Activated naive CD4-positive, alpha-beta T cell treated with anti-CD3 and anti-CD28 coated beads for 36 hours (primary cell): ENCODE measurements at regions of chr18 and their contacts with region 1.

Region 1: DNA sequence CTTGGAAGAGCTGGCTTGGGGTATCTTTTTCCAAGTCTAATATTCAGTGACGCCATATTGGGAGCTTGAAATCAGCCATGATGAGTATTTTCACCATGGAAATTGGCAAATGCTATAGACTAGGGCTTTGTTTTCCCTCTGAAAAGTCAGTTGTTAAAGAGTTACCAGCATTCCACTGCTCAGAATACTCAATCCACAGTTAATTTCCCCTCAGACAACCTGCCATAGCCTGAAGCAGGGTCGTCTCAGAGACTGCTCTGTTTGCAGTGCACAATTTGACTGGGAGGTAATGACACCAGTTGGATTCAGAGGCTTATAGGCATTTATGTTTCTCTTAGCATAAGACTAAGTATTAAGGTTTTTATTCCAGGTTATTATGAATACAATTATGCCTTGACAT is 35.5 kb upstream of the TMEM200C start:
- DNase-seq: no peak
- H3K4me3 Mint-ChIP-seq: no peak overlapping the region
- H3K27ac Mint-ChIP-seq: no peak overlapping the region
- H3K4me1 Mint-ChIP-seq: no peaks in the 10 kb centered on the region
- H3K27me3 Mint-ChIP-seq: peaks cover 13% of the 10 kb centered on the region

Region 2: DNA sequence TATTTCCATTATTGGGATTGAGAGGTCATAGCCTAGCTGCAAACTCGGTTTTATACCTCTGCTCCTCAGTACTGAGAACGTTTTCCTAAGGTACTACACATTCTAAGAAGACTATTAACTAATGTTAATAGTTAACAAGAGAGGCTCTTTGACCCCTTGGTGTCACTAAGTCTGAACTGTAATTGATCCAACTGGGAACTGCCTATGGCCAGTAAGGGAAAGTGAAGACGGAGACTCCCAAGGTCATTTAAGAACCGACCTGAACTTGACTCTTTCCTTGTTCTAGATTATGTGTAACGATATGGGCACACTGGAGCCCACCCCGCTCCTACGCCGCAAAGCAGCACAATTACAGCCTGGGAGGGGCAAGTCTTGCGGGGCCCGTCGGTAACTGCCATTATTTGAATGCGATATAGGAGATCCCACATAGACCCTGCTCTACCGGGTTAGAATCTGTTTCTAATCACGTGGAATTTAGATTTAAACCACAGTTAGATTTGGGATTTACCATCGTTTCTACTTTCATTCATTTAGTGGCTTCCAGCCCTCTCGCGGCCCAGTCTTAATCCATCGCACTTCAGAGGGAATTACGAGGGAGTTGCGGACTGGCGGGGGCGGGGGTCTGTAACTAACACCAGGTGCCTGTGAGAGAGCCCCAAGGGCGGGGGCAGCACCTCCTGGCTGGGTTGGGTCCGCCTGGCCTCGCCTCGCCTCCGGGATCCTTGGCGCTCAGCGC is 302.8 kb before region 1 on chr18:
- CTCF ChIA-PET with region 1: no interaction called
- intact Hi-C with region 1: no loop called
- DNase-seq: no peak
- H3K4me3 Mint-ChIP-seq: peak overlapping the region; percentile 58
- H3K27ac Mint-ChIP-seq: no peak overlapping the region
- H3K4me1 Mint-ChIP-seq: no peaks in the 10 kb centered on the region
- H3K27me3 Mint-ChIP-seq: peaks cover 26% of the 10 kb centered on the region

Region 3: DNA sequence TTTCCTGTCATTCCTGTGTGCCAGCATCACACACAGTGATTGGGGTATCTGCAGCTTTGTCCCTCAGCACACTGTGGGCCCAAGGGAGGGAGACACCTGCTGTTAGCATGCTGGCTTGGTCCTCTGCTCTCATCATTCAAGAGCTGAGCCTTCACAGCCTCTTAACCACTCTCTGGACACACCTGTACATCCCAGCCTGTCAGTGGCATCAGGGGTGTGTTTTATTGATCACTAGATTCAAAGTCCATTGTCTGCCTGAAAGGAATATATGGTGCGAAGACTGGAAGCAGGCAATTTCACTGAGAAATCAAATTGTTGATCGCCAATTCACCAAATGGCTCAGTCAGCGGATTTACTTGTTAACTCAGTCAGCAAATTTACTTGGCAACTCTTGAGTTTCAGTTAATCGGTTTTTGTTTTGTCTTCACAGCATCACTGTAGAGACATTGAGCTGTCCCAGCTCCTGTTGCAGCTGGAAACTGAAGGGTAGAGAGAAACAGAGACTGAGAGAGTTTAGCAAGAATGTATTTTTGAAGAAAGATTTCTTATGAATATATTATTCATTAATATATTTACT is 20.8 kb after region 1 on chr18:
- CTCF ChIA-PET with region 1: no interaction called
- intact Hi-C with region 1: loop called (anchors 2 kb)
- DNase-seq: no peak
- H3K4me3 Mint-ChIP-seq: no peak overlapping the region
- H3K27ac Mint-ChIP-seq: no peak overlapping the region
- H3K4me1 Mint-ChIP-seq: no peaks in the 10 kb centered on the region
- H3K27me3 Mint-ChIP-seq: no peaks in the 10 kb centered on the region